Transverse colon (tissue), 4 donors: ENCODE measurements at regions of chr11 and their contacts with region 1.

Region 1: DNA sequence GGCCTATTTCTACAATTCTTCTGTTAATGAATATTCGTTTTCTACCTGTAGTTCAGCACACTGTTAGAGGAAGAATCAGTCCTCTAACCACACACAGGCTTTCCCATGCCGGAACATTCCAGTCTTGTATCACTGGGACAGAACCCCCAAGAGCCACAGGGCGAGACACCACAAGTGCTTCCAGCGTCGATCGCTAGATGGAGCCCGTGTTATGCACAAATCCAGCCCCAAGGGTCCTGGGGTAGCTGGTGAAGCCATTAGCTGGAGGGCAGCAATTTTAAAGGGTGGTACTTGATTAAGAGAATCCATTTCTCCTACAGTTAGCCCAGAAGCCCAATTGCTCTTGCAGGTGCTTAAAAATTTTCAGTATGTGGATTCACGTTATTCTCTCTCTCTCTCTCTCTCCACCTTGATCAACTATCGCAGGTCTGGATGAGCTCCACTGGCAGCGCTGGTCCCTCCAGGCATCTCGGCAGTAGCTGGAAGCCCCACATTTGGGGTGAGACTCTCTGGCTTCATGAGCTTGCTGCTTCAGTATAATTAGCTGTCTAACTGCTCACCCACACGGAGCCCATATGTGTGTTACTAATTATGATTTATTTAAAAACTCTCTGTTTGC is 148.2 kb upstream of the SNX19 start:
- DNase-seq: peak; percentile 25
- H3K4me3 ChIP-seq: no peak overlapping the region
- H3K27ac ChIP-seq: no peak overlapping the region
- H3K4me1 ChIP-seq: no peaks in the 10 kb centered on the region
- H3K27me3 ChIP-seq: no peaks in the 10 kb centered on the region
- CTCF ChIP-seq: peak; percentile 61 to 74 (median 68)
- EP300 ChIP-seq: no peak
- POLR2A ChIP-seq: no peak

Region 2: GRCh38 chr11:131217313-131218310 is 153.1 kb after region 1 on chr11:
- in situ Hi-C with region 1: no loop called
- intact Hi-C with region 1: loop called (anchors 5 kb)
- DNase-seq: no peak
- H3K4me3 ChIP-seq: no peak overlapping the region
- H3K27ac ChIP-seq: no peak overlapping the region
- H3K4me1 ChIP-seq: no peaks in the 10 kb centered on the region
- H3K27me3 ChIP-seq: no peaks in the 10 kb centered on the region
- CTCF ChIP-seq: no peak
- EP300 ChIP-seq: no peak
- POLR2A ChIP-seq: no peak

Region 3: GRCh38 chr11:131504199-131504949 is 439.9 kb after region 1 on chr11:
- in situ Hi-C with region 1: loop called in 2 of 4 experiments (anchors 10 to 25 kb)
- intact Hi-C with region 1: no loop called
- DNase-seq: no peak
- H3K4me3 ChIP-seq: no peak overlapping the region
- H3K27ac ChIP-seq: no peak overlapping the region
- H3K4me1 ChIP-seq: no peaks in the 10 kb centered on the region
- H3K27me3 ChIP-seq: no peaks in the 10 kb centered on the region
- CTCF ChIP-seq: no peak
- EP300 ChIP-seq: no peak
- POLR2A ChIP-seq: no peak

Region 4: DNA sequence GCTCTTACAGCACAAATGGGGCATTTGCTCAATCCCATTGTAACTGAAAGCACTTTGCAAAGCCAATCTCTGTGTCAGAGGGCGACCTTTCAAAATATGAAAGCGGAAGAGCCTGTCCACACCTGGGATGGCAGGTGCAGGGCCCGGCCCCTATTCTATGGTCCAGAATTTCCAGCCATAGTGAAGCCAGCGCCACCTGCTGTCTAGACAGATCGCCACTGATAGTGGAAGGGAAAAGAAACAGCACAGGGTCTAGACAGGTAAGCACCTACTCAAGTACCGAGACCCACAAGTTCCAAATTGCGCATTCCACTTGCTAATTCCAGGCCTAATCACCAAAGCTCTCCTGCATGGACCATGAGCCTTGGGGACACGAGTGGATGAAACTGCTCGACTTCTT is 447.3 kb after region 1 on chr11:
- in situ Hi-C with region 1: loop called in 2 of 4 experiments (anchors 10 to 25 kb)
- intact Hi-C with region 1: loop called (anchors 5 kb)
- DNase-seq: peak; percentile 42
- H3K4me3 ChIP-seq: no peak overlapping the region
- H3K27ac ChIP-seq: no peak overlapping the region
- H3K4me1 ChIP-seq: no peaks in the 10 kb centered on the region
- H3K27me3 ChIP-seq: no peaks in the 10 kb centered on the region
- CTCF ChIP-seq: peak; percentile 48 to 55 (median 50)
- EP300 ChIP-seq: no peak
- POLR2A ChIP-seq: no peak

Region 5: GRCh38 chr11:131674051-131674755 is 609.7 kb after region 1 on chr11:
- in situ Hi-C with region 1: loop called in 3 of 4 experiments (anchors 10 to 25 kb)
- intact Hi-C with region 1: loop called (anchors 5 kb)
- DNase-seq: peak; percentile 56
- H3K4me3 ChIP-seq: no peak overlapping the region
- H3K27ac ChIP-seq: no peak overlapping the region
- H3K4me1 ChIP-seq: peaks cover 0 to 4% (median 0%) of the 10 kb centered on the region in 4 donors
- H3K27me3 ChIP-seq: no peaks in the 10 kb centered on the region
- CTCF ChIP-seq: peak; percentile 72 to 90 (median 89)
- EP300 ChIP-seq: no peak
- POLR2A ChIP-seq: no peak